CD4-positive, alpha-beta T cell (primary cell): ENCODE measurements at regions of chr10 and their contacts with region 1.

Region 1: DNA sequence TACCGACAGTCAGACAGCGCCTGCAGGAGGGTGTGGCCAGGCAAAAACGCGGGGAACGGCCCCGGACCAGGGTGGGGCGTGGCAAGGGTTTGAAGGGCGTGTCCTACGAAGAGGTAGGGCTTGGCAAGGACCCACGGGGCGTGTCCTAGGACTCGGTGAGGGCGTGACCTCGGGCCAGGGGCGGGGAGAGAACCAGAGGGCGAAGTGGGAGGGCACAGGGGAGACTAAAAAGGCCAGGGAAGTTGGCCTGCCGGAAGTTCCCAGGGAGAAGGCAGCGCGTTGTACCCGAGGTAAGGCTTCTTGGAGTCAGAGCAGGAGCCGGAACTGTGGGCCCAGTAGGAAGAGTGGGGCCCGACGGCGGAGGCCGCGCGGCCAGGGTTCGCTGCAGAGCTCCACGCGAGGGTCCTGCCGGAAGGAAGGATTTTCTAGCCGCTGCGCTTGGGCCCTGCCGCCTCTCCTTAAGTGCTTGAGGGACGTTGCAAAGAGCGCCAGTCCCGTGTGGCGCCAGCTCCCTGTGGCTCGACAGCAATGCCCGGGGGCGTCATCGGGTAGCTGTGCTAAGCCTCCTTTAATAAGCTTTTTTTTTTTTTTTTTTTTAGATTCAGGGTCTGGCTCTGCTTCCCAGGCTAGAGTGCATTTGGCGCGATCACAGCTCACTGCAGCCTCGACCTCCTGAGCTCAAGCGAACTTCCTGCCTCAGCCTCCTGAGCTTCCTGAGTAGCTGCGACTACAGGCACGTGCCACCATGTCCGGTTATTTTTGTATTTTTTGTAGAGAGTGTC is at the start of gene PTER:
- DNase-seq: peak; percentile 95 to 99 (median 97)
- ATAC-seq: peak; percentile 98
- H3K4me3 ChIP-seq: peak within 1 kb of the TSS; percentile 68
- H3K4me3 Mint-ChIP-seq: peak within 1 kb of the TSS; percentile 91
- H3K27ac ChIP-seq: peak within 1 kb of the TSS; percentile 57 to 81
- H3K27ac Mint-ChIP-seq: peak within 1 kb of the TSS; percentile 80
- H3K4me1 ChIP-seq: peaks cover 47% of the 10 kb centered on the region
- H3K4me1 Mint-ChIP-seq: peaks cover 47% of the 10 kb centered on the region
- H3K27me3 ChIP-seq: no peaks in the 10 kb centered on the region
- H3K27me3 Mint-ChIP-seq: no peaks in the 10 kb centered on the region
- CTCF ChIP-seq: no peak
- total RNA-seq, gene PTER: 8.2 to 9.7 TPM

Region 2: GRCh38 chr10:15859906-15860691 is 576.9 kb before region 1 on chr10 and contains the start of gene MINDY3:
- CTCF ChIA-PET with region 1: no interaction called
- POLR2A ChIA-PET with region 1: interaction called, 3 read pairs
- intact Hi-C with region 1: loop called in 1 of 2 experiments (anchors 5 kb)
- DNase-seq: peak; percentile 65 to 92 (median 76)
- ATAC-seq: peak; percentile 95
- H3K4me3 ChIP-seq: peak within 1 kb of the TSS; percentile 83
- H3K4me3 Mint-ChIP-seq: peak within 1 kb of the TSS; percentile 98
- H3K27ac ChIP-seq: peak within 1 kb of the TSS in 1 of 2 donors; percentile 56
- H3K27ac Mint-ChIP-seq: peak within 1 kb of the TSS; percentile 89
- H3K4me1 ChIP-seq: peaks cover 10% of the 10 kb centered on the region
- H3K4me1 Mint-ChIP-seq: peaks cover 52% of the 10 kb centered on the region
- H3K27me3 ChIP-seq: peaks cover 0 to 17% of the 10 kb centered on the region in 2 experiments
- H3K27me3 Mint-ChIP-seq: peaks cover 19% of the 10 kb centered on the region
- CTCF ChIP-seq: no peak
- total RNA-seq, gene MINDY3: 39.8 to 40.6 TPM

Region 3: DNA sequence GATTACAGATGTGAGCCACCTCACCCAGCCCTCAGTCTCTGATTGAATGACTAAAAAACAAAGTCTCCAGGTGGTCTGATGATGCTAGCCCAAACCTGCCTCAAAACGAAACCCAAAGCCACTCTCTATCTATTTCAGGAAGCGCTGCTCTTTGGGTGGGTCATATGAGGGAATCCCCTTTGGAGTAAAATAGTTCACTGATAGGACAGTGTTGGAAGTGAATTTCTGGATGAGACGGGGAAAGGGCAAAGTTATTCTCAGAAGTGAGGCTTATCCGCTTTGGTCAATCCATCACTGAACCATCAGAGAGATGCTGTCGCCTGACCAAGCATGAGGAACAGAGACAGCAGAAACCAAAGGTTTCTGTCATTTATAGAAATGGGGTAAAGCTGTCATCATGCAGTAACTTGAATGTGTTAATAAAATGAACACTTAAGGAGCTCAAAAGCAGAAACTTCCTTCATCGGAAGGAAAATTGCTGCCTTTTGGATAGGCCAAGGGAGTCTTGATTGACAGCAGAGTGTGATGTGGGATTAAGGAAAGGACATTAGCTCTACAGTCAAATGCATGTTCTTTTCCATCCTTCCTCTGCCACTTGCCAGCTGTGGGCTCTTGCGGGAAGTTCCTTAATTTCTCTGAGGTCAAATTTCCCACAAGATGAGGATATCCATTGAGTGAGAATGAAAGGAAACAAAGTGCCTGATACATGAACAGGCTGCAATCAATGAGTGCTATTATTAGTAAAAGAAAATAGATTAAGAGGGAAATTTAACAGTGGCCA is 149.6 kb after region 1 on chr10:
- CTCF ChIA-PET with region 1: no interaction called
- POLR2A ChIA-PET with region 1: no interaction called
- intact Hi-C with region 1: no loop called
- DNase-seq: no peak
- ATAC-seq: no peak
- H3K4me3 ChIP-seq: no peak overlapping the region
- H3K4me3 Mint-ChIP-seq: no peak overlapping the region
- H3K27ac ChIP-seq: no peak overlapping the region
- H3K27ac Mint-ChIP-seq: no peak overlapping the region
- H3K4me1 ChIP-seq: no peaks in the 10 kb centered on the region
- H3K4me1 Mint-ChIP-seq: no peaks in the 10 kb centered on the region
- H3K27me3 ChIP-seq: no peaks in the 10 kb centered on the region
- H3K27me3 Mint-ChIP-seq: peaks cover 12% of the 10 kb centered on the region
- CTCF ChIP-seq: no peak

Region 4: GRCh38 chr10:17153296-17153695 is 716.3 kb after region 1 on chr10:
- CTCF ChIA-PET with region 1: no interaction called
- POLR2A ChIA-PET with region 1: no interaction called
- intact Hi-C with region 1: loop called in 1 of 2 experiments (anchors 10 kb)
- DNase-seq: no peak
- ATAC-seq: no peak
- H3K4me3 ChIP-seq: no peak overlapping the region
- H3K4me3 Mint-ChIP-seq: no peak overlapping the region
- H3K27ac ChIP-seq: no peak overlapping the region
- H3K27ac Mint-ChIP-seq: no peak overlapping the region
- H3K4me1 ChIP-seq: no peaks in the 10 kb centered on the region
- H3K4me1 Mint-ChIP-seq: no peaks in the 10 kb centered on the region
- H3K27me3 ChIP-seq: no peaks in the 10 kb centered on the region
- H3K27me3 Mint-ChIP-seq: no peaks in the 10 kb centered on the region
- CTCF ChIP-seq: no peak